ENCODE measurements at regions of chr11 and their contacts with region 1.

Region 1: DNA sequence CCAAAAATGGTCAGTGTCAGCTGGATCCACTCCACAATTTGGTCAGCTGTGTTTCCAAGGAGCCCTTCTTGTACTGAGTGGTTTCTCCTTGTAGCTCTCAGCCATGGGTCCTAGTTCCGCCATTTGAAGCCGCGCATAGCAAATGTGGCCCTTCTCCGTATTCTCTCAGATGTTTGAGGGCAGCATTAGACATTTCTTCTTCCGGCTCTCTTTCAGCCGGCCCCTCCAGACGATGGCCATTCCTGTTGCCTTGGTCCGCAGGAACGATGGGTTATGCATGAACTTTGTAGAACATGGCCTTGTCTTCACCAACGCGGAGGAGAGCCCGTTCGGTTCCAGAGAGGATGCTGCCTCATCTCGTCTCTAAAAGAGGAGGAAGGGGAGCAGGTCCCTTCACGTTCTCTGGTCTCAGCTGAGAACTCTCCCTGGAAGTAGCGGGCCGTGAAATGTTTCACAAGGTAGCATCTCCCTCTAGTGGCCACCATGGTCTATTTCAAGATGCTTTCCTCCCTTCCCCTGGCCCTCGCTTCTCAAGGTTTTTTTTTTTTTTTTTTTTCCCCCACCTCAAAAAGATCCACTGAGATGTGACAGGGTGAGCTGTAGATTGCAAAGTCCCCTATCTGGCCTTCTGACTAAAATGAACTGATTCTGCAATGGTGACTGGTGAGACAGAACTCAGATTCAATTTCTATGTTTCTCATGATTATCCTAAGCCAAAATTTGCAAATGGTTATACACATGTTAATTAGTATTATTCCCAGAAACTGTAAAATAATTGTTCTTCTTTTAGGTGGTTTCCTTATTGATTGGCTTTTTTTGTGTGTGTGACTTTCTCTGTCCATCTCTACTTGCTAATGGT is 19.8 kb upstream of the PLET1 start:
- DNase-seq: peak; percentile 95
- H3K4me3 ChIP-seq: peak overlapping the region; percentile 49
- H3K27ac ChIP-seq: no peak overlapping the region
- H3K4me1 ChIP-seq: peaks cover 18% of the 10 kb centered on the region
- H3K27me3 ChIP-seq: no peaks in the 10 kb centered on the region
- CTCF ChIP-seq: peak; percentile 81

Region 2: DNA sequence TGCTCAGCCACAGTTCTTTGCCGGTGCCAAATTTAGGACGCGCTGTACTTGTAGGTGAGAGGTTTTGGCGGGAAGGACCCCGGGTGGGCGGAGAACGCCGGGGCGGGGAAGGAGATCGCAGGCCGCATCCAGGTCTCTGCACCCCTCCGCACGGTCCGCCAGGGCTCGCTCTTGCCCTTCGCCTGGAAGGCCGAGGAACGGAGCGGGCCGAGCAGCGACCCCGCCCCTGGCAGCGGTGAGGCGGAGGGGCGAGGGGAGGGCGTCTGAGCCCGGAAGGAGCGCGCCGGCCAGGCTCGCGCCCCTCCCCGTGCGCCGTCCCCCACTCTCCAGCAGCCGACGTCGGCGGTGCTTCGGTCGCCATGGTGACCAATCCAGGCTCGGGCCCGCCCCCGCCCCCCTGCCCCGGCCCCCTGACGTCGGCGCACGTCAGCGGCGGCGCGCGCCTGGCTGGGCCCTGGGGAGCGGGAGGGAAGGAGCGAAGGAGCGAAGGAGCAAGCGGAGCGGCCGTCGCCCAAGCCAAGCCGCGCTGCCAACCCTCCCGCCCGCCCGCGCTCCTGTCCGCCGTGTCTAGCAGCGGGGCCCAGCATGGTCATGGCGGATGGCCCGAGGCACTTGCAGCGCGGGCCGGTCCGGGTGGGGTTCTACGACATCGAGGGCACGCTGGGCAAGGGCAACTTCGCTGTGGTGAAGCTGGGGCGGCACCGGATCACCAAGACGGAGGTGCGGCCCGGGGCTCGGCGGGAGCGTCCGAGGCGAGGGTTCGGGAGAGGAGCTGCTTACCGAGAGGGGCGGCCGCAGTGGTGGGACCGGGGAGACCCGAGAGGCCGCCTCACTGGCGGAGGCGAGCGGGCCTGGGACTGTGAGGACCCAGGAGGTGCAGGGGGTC is 678.3 kb before region 1 on chr11 and contains the start of gene SIK2:
- CTCF ChIA-PET with region 1: no interaction called
- POLR2A ChIA-PET with region 1: no interaction called
- intact Hi-C with region 1: loop called (anchors 10 kb)
- DNase-seq: peak; percentile 99
- H3K4me3 ChIP-seq: peak within 1 kb of the TSS; percentile 75
- H3K27ac ChIP-seq: peak within 1 kb of the TSS; percentile 93
- H3K4me1 ChIP-seq: peaks cover 39% of the 10 kb centered on the region
- H3K27me3 ChIP-seq: no peaks in the 10 kb centered on the region
- CTCF ChIP-seq: peak; percentile 91
- total RNA-seq, gene SIK2: 18.7 and 21.5 TPM in 2 replicates

Region 3: DNA sequence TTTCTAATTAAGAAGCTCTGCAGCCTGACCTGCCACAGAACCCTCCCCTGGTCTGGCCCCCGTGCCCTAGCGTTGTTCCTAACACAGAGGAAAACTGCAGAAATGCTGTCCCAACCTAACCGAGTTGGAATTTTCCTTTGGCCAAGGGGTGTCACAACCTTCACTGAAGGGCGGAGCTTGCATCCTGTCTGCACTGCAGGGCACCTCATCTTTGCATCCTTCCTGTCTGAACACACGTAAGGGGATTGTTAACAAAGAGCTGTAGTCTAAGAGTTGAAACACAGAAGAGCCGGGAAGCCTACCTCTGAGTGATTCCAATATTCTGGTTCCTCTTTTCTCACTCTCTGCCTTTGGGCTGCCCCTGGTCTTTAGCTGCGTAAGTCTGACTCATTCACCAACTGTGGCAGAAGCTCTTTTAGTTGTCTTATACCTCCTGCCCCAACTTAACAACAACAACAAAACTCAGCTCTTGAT is 341.8 kb before region 1 on chr11:
- CTCF ChIA-PET with region 1: no interaction called
- POLR2A ChIA-PET with region 1: no interaction called
- intact Hi-C with region 1: loop called (anchors 5 kb)
- DNase-seq: peak; percentile 35
- H3K4me3 ChIP-seq: peak overlapping the region; percentile 58
- H3K27ac ChIP-seq: no peak overlapping the region
- H3K4me1 ChIP-seq: peaks cover 44% of the 10 kb centered on the region
- H3K27me3 ChIP-seq: no peaks in the 10 kb centered on the region
- CTCF ChIP-seq: no peak

Region 4: DNA sequence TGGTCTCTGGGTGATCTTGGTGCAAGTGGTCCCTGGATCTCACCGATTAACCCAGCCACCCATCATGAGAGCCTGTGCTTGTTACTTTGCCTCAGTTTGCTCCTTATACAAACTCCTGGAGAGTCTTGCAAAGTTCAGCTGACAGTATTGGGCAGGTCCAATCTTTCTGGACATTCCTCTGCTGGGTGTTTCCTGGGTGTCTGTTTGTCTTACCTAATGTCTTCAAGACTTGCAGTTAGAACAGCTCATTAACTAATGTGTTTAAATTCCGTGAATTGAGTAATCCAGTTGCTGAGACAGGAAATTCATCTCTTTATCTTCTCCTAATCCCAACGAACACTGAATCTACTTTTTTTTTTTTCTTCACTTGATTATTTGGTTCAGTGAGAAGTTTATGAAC is 84.6 kb before region 1 on chr11:
- CTCF ChIA-PET with region 1: interaction called, 10 read pairs
- POLR2A ChIA-PET with region 1: no interaction called
- intact Hi-C with region 1: no loop called
- DNase-seq: peak; percentile 93
- H3K4me3 ChIP-seq: no peak overlapping the region
- H3K27ac ChIP-seq: peak overlapping the region; percentile 59
- H3K4me1 ChIP-seq: peaks cover 77% of the 10 kb centered on the region
- H3K27me3 ChIP-seq: no peaks in the 10 kb centered on the region
- CTCF ChIP-seq: no peak

Region 5: GRCh38 chr11:112570333-112570732 is 289.8 kb after region 1 on chr11:
- CTCF ChIA-PET with region 1: no interaction called
- POLR2A ChIA-PET with region 1: interaction called, 15 read pairs
- intact Hi-C with region 1: no loop called
- DNase-seq: peak; percentile 36
- H3K4me3 ChIP-seq: no peak overlapping the region
- H3K27ac ChIP-seq: no peak overlapping the region
- H3K4me1 ChIP-seq: peaks cover 14% of the 10 kb centered on the region
- H3K27me3 ChIP-seq: no peaks in the 10 kb centered on the region
- CTCF ChIP-seq: no peak

Measured in A673 (cell line).